MCF 10A (cell line): ENCODE measurements at regions of chr12 and their contacts with region 1.

Region 1: GRCh38 chr12:26832822-26833742 is at the start of gene ITPR2:
- DNase-seq: peak; percentile 96
- H3K4me3 Mint-ChIP-seq: peak within 1 kb of the TSS; percentile 90
- H3K27ac Mint-ChIP-seq: peak within 1 kb of the TSS; percentile 89
- H3K4me1 Mint-ChIP-seq: peaks cover 16% of the 10 kb centered on the region
- H3K27me3 Mint-ChIP-seq: no peaks in the 10 kb centered on the region
- CTCF ChIP-seq: peak; percentile 38
- total RNA-seq, gene ITPR2: 14.3 and 15.7 TPM in 2 replicates

Region 2: GRCh38 chr12:26701604-26702215 is 131.4 kb before region 1 on chr12:
- CTCF ChIA-PET with region 1: interaction called, 5 read pairs
- POLR2A ChIA-PET with region 1: interaction called, 4 read pairs
- intact Hi-C with region 1: loop called (anchors 1 kb)
- DNase-seq: peak; percentile 65
- H3K4me3 Mint-ChIP-seq: no peak overlapping the region
- H3K27ac Mint-ChIP-seq: no peak overlapping the region
- H3K4me1 Mint-ChIP-seq: peaks cover 13% of the 10 kb centered on the region
- H3K27me3 Mint-ChIP-seq: no peaks in the 10 kb centered on the region
- CTCF ChIP-seq: peak; percentile 66

Region 3: GRCh38 chr12:26748741-26749431 is 84.2 kb before region 1 on chr12:
- CTCF ChIA-PET with region 1: interaction called, 4 read pairs
- POLR2A ChIA-PET with region 1: interaction called, 28 read pairs
- intact Hi-C with region 1: no loop called
- DNase-seq: peak; percentile 41
- H3K4me3 Mint-ChIP-seq: peak overlapping the region; percentile 65
- H3K27ac Mint-ChIP-seq: peak overlapping the region; percentile 80
- H3K4me1 Mint-ChIP-seq: peaks cover 39% of the 10 kb centered on the region
- H3K27me3 Mint-ChIP-seq: no peaks in the 10 kb centered on the region
- CTCF ChIP-seq: no peak

Region 4: DNA sequence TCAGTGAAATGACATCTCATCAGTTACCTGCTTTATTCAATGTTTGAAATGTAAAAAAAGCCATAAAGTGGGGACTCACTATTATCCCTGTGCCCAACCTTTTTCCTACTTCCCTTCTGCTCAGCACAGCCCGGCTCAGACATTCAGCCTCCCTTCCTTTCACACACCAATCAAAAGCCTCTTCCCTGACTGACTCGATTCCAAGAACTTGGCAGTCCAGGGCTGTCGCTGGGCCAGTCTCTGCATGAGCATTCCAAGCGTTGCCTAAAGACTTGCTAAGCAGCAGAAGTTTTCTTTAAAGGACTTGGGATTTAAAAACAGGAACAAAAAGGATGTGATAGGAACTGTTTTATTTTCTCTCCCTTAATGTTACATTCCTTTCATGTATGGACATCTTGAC is 22.8 kb before region 1 on chr12:
- CTCF ChIA-PET with region 1: interaction called, 7 read pairs
- POLR2A ChIA-PET with region 1: interaction called, 20 read pairs
- intact Hi-C with region 1: no loop called
- DNase-seq: peak; percentile 61
- H3K4me3 Mint-ChIP-seq: no peak overlapping the region
- H3K27ac Mint-ChIP-seq: peak overlapping the region; percentile 84
- H3K4me1 Mint-ChIP-seq: peaks cover 16% of the 10 kb centered on the region
- H3K27me3 Mint-ChIP-seq: no peaks in the 10 kb centered on the region
- CTCF ChIP-seq: no peak

Region 5: GRCh38 chr12:26884765-26885576 is 51.9 kb after region 1 on chr12:
- CTCF ChIA-PET with region 1: interaction called, 17 read pairs
- POLR2A ChIA-PET with region 1: interaction called, 4 read pairs
- intact Hi-C with region 1: no loop called
- DNase-seq: peak; percentile 86
- H3K4me3 Mint-ChIP-seq: no peak overlapping the region
- H3K27ac Mint-ChIP-seq: no peak overlapping the region
- H3K4me1 Mint-ChIP-seq: peaks cover 8% of the 10 kb centered on the region
- H3K27me3 Mint-ChIP-seq: no peaks in the 10 kb centered on the region
- CTCF ChIP-seq: peak; percentile 82